ENCODE measurements at regions of chr15 and their contacts with region 1.

Region 1: DNA sequence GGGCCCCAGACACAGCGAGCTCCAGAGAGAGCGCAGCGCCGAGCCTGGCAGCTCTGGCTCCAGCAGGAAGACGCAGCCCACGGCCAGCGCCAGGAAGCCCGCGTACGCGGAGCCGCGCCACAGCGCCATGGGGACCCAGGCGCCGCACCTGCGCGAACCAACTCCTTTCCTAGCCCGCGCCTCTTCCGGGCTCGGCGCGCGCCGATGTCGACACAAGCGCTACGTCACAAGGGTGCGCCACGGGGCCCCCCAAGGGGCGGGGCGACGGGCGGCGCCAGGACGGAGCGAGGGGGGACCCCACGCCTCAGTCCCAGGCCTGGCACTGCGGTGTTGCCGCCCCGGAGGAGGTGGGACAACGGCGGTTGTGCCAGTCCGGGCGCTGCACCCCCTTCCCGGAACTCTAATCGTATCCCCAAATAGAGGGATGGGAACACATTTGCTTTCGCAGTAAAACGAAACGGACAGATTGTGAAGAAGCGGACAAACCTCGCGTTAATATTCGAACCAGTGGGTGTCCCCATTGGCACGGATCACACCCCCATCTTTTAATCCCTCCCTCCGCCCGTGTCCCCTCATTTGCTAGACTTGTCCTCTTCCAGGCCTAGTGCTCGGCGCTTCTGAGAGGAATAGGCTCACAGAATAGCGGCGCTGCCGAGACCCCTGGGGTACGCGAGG is at the start of gene ADPGK:
- DNase-seq: peak; percentile 86 to 98 (median 90)

Region 2: GRCh38 chr15:72740219-72740618 is 43.5 kb before region 1 on chr15:
- intact Hi-C with region 1: no loop called
- DNase-seq: no peak

Region 3: GRCh38 chr15:73051811-73052678 is 268.3 kb after region 1 on chr15 and contains the start of gene NEO1:
- intact Hi-C with region 1: loop called (anchors 1 kb)
- DNase-seq: peak; percentile 84 to 99 (median 88)

Region 4: DNA sequence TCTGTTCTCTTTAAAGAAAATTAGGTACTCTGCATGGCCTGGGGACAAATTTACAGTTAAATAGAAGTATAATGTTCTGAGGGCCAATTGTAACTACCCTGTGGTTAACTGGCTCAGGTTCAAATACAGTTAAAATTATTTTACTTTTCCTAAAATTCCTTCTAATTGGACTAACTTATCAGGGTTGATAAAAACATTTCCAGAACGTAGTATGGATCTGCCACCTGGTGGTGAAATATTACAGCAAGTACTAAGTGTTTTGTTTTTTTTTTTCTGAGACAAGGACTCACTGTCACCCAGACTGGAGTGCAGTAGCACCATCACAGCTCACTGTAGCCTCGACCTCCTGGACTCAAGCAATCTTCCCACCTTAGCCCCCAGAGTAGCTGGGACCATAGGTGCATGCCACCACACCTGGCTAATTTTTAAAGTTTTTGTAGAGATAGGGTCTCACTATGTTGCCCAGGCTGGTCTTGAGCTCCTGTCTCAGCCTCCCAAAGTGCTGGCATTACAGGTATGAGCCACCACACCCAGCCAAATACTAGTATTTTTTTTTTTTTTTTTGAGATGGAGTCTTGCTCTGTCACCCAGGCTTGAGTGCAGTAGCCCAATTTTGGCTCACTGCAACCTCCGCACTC is 297.7 kb after region 1 on chr15:
- intact Hi-C with region 1: loop called (anchors 2 kb)
- DNase-seq: peak in 1 of 10 donors; percentile 29

Region 5: GRCh38 chr15:73240866-73241499 is 457.3 kb after region 1 on chr15:
- intact Hi-C with region 1: loop called (anchors 10 kb)
- DNase-seq: peak in 8 of 10 donors; percentile 22 to 85 (median 74)

Measured in posterior cingulate gyrus (tissue), 11 donors.